ENCODE measurements at regions of chr19 and their contacts with region 1.

Region 1: GRCh38 chr19:49712397-49712859 is 21.5 kb downstream of the CPT1C start:
- DNase-seq: no peak
- H3K4me3 ChIP-seq: no peak overlapping the region
- H3K4me3 Mint-ChIP-seq: no peak overlapping the region
- H3K27ac ChIP-seq: no peak overlapping the region
- H3K27ac Mint-ChIP-seq: no peak overlapping the region
- H3K4me1 ChIP-seq: peaks cover 4% of the 10 kb centered on the region
- H3K4me1 Mint-ChIP-seq: peaks cover 2 to 8% (median 5%) of the 10 kb centered on the region in 4 donors
- H3K27me3 ChIP-seq: no peaks in the 10 kb centered on the region
- H3K27me3 Mint-ChIP-seq: peaks cover 0 to 3% of the 10 kb centered on the region in 2 donors

Region 2: DNA sequence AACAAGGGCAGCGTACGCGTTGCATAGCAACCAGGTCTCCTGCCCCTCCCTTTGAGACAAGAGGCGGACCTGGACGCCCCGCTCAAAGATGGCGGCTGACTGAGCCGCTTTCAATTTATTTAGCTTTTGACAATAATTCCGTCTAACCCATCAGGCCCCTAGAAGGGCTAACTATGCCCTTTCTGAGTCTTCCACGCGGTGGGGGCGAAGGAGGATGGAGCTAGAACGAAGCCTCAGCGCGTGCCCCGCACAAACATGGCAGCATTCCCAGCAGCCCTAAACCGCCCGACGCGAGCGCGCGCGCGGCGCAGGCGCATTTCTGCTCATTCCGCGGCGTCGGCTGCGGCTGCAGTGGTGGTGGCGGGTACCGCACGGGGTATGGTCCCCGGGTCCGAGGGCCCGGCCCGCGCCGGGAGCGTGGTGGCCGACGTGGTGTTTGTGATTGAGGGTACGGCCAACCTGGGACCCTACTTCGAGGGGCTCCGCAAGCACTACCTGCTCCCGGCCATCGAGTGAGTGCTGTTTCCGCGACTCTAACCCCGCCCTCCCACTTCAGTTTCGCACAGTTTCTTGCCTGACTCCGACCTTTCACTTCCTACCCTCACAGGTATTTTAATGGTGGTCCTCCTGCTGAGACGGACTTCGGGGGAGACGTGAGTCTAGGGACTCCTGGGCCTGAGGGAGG is 105.7 kb after region 1 on chr19 and contains the start of gene MED25:
- CTCF ChIA-PET with region 1: interaction called, 4 read pairs
- POLR2A ChIA-PET with region 1: interaction called, 8 read pairs
- intact Hi-C with region 1: loop called (anchors 1 kb)
- DNase-seq: peak; percentile 90 to 96 (median 95)
- H3K4me3 ChIP-seq: peak within 1 kb of the TSS; percentile 64 to 88
- H3K4me3 Mint-ChIP-seq: peak within 1 kb of the TSS; percentile 89 to 99 (median 99)
- H3K27ac ChIP-seq: peak within 1 kb of the TSS; percentile 95
- H3K27ac Mint-ChIP-seq: peak within 1 kb of the TSS; percentile 98 to 100 (median 100)
- H3K4me1 ChIP-seq: peaks cover 33% of the 10 kb centered on the region
- H3K4me1 Mint-ChIP-seq: peaks cover 17 to 54% (median 36%) of the 10 kb centered on the region in 4 donors
- H3K27me3 ChIP-seq: no peaks in the 10 kb centered on the region
- H3K27me3 Mint-ChIP-seq: no peaks in the 10 kb centered on the region
- total RNA-seq, gene MED25: 41.8 to 48.8 TPM

Region 3: DNA sequence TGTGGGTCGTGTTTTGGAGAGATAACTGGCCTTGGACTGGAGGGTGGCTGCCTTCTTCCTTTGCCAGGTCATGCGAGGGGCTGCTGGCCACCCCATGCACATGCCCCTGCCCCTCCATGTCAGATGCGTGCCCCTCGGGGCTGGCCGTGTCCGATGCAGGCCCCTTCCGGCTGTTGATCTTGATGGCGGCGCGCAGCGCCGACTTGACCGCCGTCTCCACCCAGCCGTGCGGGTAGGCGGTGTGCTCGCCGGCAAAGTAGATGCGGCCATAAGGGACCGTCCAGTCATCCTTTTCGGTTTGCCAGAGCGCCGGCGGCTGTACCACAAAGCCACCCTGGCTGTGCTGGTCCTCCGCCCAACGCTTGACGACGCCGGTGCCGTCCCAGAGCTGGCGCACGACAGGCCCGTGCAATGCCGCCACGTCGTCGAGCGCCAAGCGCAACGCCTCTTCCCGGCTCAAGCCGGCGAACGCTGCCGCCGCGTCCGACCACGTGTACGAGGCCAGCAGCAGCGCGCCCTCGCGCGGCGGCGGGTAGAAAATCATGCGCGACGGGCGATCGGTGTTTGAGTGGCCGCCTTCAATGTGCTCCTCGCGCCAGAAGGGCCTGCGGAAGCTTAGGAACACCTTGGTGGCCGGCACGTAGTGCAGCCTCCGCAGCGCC is 177.4 kb after region 1 on chr19:
- CTCF ChIA-PET with region 1: interaction called, 7 read pairs
- POLR2A ChIA-PET with region 1: no interaction called
- intact Hi-C with region 1: loop called (anchors 1 kb)
- DNase-seq: peak; percentile 77 to 79 (median 77)
- H3K4me3 ChIP-seq: peak overlapping the region in 1 of 2 donors; percentile 63
- H3K4me3 Mint-ChIP-seq: peak overlapping the region; percentile 77 to 85 (median 80)
- H3K27ac ChIP-seq: peak overlapping the region; percentile 39
- H3K27ac Mint-ChIP-seq: peak overlapping the region; percentile 81 to 95 (median 90)
- H3K4me1 ChIP-seq: peaks cover 10% of the 10 kb centered on the region
- H3K4me1 Mint-ChIP-seq: peaks cover 4 to 34% (median 23%) of the 10 kb centered on the region in 4 donors
- H3K27me3 ChIP-seq: no peaks in the 10 kb centered on the region
- H3K27me3 Mint-ChIP-seq: no peaks in the 10 kb centered on the region